Natural killer cell (primary cell): ENCODE measurements at regions of chr5 and their contacts with region 1.

Region 1: DNA sequence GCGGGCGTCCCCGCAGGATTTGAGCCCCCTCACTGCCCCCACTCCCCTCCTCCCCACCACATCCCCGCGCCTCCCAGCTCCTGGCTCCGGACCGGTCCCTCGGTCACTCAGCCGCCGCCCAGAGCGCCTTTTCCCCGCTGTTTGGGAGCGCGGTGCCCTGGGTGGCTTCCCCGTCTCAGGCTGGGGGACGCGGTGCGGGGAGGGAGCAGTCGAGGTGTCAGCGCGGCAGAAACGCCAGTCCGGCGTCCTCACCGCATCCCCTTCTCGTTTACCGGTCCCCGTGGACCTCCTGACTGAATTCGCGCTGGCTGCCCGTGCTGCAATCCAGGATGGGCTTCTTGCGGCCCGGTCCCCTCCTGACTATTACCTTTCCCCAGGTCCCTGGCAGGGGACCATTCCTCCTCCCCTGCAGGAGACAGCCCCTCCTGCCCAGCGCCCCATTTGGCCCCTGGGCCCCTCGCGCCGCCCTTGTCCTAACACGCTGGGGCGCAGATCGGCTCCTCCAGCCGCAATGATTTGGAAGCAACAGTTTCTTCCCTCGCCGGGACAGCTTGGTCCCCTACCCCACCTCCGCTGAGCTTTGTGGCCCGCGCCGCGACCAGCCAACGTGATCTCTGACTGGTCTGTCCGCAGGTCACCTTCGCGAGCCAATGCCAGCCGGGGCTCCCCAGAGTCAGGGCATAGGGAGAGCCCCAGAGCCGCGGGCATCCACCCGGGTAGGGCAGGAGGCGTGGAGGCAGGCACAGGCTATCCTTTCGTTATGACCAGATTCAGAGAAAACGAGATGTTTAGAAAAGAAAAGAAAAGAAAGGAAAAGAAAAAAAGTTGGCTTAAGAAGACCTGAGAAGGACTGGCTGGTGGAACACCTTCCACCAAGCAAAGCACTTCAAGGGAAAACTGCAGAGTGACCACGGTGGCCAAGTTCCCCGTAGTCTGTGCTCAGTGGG is 1.2 kb downstream of the ANKRD33B start:
- DNase-seq: peak; percentile 22 to 32
- ATAC-seq: no peak
- H3K4me3 ChIP-seq: peak overlapping the region; percentile 35
- H3K4me3 Mint-ChIP-seq: peak overlapping the region; percentile 89
- H3K27ac ChIP-seq: no peak overlapping the region
- H3K27ac Mint-ChIP-seq: peak overlapping the region; percentile 38 to 82
- H3K4me1 ChIP-seq: peaks cover 33% of the 10 kb centered on the region
- H3K4me1 Mint-ChIP-seq: peaks cover 15 to 29% of the 10 kb centered on the region in 2 donors
- H3K27me3 ChIP-seq: peaks cover 3% of the 10 kb centered on the region
- H3K27me3 Mint-ChIP-seq: peaks cover 0 to 2% of the 10 kb centered on the region in 2 donors
- CTCF ChIP-seq: no peak

Region 2: DNA sequence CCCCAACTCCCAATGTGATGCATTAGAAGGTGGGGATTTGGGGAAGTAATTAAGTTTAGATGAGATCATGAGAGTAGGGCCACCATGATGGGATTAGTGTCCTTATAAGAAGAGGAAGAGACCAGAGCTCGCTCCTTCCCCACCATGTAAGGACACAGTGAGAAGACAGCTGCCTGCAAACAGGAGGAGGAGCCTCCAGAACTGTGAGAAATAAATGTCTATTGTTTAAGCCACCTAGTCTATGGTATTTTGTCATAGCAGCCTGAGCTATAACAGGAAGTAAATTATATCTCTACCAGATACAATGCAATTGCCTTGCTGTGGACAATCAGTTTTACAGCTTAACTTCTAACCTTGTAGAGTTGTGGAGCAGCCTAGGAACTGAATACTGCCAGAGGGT is 56.7 kb after region 1 on chr5:
- intact Hi-C with region 1: loop called (anchors 5 kb)
- DNase-seq: no peak
- ATAC-seq: peak in 2 of 3 donors; percentile 94 to 98
- H3K4me3 ChIP-seq: no peak overlapping the region
- H3K4me3 Mint-ChIP-seq: peak overlapping the region; percentile 28
- H3K27ac ChIP-seq: no peak overlapping the region
- H3K27ac Mint-ChIP-seq: peak overlapping the region; percentile 85 to 92
- H3K4me1 ChIP-seq: no peaks in the 10 kb centered on the region
- H3K4me1 Mint-ChIP-seq: peaks cover 14 to 23% of the 10 kb centered on the region in 2 donors
- H3K27me3 ChIP-seq: no peaks in the 10 kb centered on the region
- H3K27me3 Mint-ChIP-seq: no peaks in the 10 kb centered on the region
- CTCF ChIP-seq: no peak

Region 3: GRCh38 chr5:10655161-10655971 is 90.3 kb after region 1 on chr5:
- intact Hi-C with region 1: no loop called
- DNase-seq: no peak
- ATAC-seq: no peak
- H3K4me3 ChIP-seq: no peak overlapping the region
- H3K4me3 Mint-ChIP-seq: no peak overlapping the region
- H3K27ac ChIP-seq: no peak overlapping the region
- H3K27ac Mint-ChIP-seq: no peak overlapping the region
- H3K4me1 ChIP-seq: no peaks in the 10 kb centered on the region
- H3K4me1 Mint-ChIP-seq: no peaks in the 10 kb centered on the region
- H3K27me3 ChIP-seq: no peaks in the 10 kb centered on the region
- H3K27me3 Mint-ChIP-seq: no peaks in the 10 kb centered on the region
- CTCF ChIP-seq: no peak